Thyroid gland (tissue), 4 donors: ENCODE measurements at regions of chr17 and their contacts with region 1.

Region 1: DNA sequence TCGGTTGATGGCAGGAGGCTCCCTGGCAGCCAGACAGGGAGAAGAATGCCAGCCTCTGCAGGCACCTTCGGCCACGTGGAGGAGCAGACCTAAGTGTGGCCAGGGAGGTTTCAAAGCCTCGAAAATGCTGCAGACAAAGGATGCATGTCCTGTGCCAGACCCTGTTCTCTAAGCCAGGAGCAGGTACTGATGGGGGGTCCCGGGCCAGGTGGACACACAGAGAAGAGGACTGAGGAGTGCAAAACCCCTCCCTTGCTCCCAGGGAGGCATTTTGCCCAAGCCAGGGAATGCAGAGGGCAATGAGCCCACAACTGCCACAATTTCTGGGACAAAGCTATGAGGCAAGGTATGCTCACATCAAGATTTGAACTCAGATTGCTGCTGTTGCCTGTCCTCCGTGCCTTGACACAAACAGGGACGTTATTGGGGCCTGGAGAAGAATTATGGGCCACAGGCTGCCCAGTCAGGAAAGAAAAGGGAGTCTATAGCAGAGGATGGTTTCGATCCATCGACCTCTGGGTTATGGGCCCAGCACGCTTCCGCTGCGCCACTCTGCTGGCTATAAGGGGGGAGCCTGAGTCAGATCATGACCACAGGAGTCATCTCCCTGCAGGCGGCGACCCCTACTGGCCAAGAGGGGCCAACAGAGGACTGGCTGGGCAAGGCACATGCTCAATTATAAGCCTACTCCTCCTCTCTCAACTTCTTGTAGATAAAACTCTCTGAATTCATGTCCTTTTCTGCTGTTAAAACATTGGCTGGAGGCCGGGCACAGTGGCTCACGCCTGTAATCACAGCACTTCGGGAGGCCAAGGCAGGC is 25.1 kb upstream of the FOXK2 start:
- DNase-seq: peak; percentile 89 to 91
- H3K4me3 ChIP-seq: no peak overlapping the region
- H3K27ac ChIP-seq: peak overlapping the region; percentile 48 to 58 (median 56)
- H3K4me1 ChIP-seq: peaks cover 17 to 26% of the 10 kb centered on the region in 2 donors
- H3K27me3 ChIP-seq: no peaks in the 10 kb centered on the region
- CTCF ChIP-seq: peak; percentile 45 to 93 (median 84)
- POLR2A ChIP-seq: no peak

Region 2: DNA sequence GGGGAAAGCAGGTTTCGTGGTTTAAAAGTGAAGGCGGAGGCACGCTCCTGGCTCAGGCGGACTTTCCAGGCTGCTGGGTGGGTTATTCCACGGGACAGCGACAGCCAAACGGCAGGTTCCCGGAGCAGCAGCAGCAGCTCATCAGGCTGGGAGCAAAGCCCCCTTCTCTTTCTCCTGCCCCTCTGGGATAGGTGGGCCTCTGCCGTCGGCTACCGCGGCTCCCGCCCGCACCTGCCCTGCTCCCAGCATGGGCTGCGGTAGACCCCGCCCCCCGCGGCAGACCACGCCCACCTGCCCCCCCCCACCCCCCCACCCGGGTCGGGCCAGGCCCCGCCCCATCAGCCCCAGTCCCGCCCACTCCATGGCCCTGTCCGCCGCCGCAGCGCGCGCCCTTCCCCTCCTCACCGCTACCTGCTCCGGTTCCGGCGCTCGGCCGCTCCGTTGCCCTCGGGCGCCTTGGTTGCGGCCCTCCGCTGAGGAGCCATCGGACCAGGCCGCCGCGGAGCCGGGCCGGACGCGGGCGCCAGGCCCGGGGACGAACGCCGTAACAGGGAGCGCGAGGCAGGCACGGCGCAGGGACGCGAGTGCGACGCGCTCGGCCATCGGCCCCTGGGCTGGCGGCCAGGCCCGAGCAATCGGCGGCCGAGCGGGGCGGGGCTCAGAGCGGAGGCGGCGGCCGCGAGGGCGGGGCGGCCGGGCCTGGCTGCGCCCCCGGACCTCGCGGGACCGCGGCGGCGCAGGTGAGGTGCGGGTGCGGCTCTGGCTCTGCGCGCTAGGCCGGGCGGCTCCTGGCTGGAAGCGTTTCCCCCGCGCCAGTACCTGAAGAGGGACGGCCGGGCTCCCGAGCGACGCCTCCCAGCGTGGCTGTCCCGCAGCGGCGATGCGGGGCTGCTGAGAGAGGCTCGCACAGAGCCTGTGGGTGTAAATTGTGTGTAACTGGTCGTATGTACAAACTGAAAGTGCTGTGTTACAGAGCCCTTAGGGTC is 76.2 kb before region 1 on chr17 and contains the starts of genes HEXD and OGFOD3:
- intact Hi-C with region 1: loop called (anchors 10 kb)
- DNase-seq: peak; percentile 85
- H3K4me3 ChIP-seq: peak within 1 kb of the TSS; percentile 53 to 95 (median 71)
- H3K27ac ChIP-seq: peak within 1 kb of the TSS; percentile 55 to 95 (median 90)
- H3K4me1 ChIP-seq: peaks cover 12 to 17% of the 10 kb centered on the region in 2 donors
- H3K27me3 ChIP-seq: no peaks in the 10 kb centered on the region
- CTCF ChIP-seq: peak in 2 of 6 experiments; percentile 39 to 41
- POLR2A ChIP-seq: peak; percentile 27 to 78
- total RNA-seq, gene HEXD: 33.2 to 72.7 (median 40.9) TPM
- total RNA-seq, gene OGFOD3: 46.5 to 57.5 (median 55.1) TPM

Region 3: DNA sequence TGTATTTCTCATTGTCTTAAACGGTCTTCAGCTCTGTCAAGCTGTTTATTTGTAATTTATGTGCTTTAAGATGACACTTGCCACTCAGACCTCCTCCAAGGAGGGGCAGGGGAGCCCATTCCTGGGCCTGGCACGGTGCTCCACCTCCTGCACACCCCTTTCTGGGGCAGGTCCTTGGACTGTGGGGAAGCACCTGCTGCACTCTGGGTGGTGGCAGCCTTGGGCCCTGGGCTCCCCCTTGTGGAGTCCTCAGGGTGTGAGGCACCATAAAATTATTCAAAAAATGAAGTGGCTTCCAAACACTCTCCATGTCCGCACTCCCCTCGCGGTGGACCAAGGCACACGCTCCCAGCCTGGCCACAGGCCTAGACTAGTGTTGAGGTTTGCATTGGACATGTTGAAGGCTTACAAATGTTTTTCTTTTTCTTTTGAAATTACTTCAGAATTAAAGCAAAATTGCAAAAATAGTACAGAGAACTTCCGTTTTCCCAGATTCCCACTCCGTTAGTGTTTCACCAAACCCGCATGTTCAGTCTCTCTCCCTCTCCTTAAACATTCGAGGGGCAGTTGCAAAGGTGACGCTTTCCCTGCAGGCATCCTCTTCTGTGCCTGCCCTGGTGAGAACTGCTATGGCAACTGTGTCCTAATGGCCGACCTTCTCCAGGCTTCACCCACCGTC is 57.5 kb after region 1 on chr17:
- intact Hi-C with region 1: loop called (anchors 2 kb)
- DNase-seq: peak; percentile 84 to 85
- H3K4me3 ChIP-seq: no peak overlapping the region
- H3K27ac ChIP-seq: peak overlapping the region in 1 of 3 donors; percentile 8
- H3K4me1 ChIP-seq: peaks cover 40 to 55% of the 10 kb centered on the region in 2 donors
- H3K27me3 ChIP-seq: no peaks in the 10 kb centered on the region
- CTCF ChIP-seq: peak; percentile 60 to 82 (median 78)
- POLR2A ChIP-seq: no peak

Region 4: DNA sequence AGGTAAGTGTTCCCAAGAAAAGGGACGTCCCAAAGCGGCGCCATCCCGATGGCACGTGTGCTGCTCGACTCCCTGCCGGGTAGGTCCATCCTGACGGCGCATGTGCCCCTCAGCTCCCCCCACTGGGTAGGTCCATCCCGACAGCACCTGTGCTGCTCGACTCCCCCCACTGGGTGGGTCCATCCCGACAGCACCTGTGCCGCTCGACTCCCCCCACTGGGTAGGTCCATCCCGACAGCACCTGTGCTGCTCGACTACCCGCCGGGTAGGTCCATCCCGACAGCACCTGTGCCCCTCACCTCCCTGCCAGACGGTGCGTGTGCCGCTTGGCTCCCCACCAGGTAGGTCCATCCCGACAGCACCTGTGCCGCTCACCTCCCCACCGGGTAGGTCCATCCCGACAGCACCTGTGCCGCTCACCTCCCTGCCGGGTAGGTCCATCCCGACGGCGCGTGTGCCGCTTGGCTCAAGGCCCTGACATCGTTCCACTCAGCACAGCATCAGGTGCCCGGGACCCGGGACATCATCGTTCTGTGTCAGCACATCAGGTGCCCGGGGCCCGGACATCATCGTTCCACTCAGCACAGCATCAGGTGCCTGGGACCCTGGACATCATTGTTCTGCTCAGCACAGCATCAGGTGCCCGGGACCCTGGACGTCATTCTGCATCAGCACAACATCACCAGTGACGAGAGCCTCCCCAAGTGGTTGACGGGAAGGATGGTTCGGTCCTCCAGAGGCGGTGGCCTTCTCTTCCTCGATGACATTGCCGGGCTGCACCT is 235.2 kb after region 1 on chr17:
- intact Hi-C with region 1: no loop called
- DNase-seq: no peak
- H3K4me3 ChIP-seq: no peak overlapping the region
- H3K27ac ChIP-seq: no peak overlapping the region
- H3K4me1 ChIP-seq: peaks cover 0 to 2% of the 10 kb centered on the region in 2 donors
- H3K27me3 ChIP-seq: no peaks in the 10 kb centered on the region
- CTCF ChIP-seq: no peak
- POLR2A ChIP-seq: no peak